T-cell (primary cell): ENCODE measurements at regions of chr12 and their contacts with region 1.

Region 1: GRCh38 chr12:9721394-9722092 is 11.4 kb downstream of the CLECL1 start:
- DNase-seq: no peak
- ATAC-seq: no peak
- H3K4me3 ChIP-seq: no peak overlapping the region
- H3K4me3 Mint-ChIP-seq: no peak overlapping the region
- H3K27ac ChIP-seq: no peak overlapping the region
- H3K27ac Mint-ChIP-seq: no peak overlapping the region
- H3K4me1 ChIP-seq: peaks cover 0 to 4% of the 10 kb centered on the region in 2 experiments
- H3K4me1 Mint-ChIP-seq: peaks cover 3 to 19% (median 15%) of the 10 kb centered on the region in 3 donors
- H3K27me3 ChIP-seq: no peaks in the 10 kb centered on the region
- H3K27me3 Mint-ChIP-seq: peaks cover 0 to 4% of the 10 kb centered on the region in 2 donors

Region 2: GRCh38 chr12:9634177-9634803 is 87.3 kb before region 1 on chr12:
- CTCF ChIA-PET with region 1: interaction called, 3 to 10 read pairs
- POLR2A ChIA-PET with region 1: no interaction called
- DNase-seq: peak; percentile 48 to 91 (median 74)
- ATAC-seq: peak; percentile 79 to 90 (median 82)
- H3K4me3 ChIP-seq: no peak overlapping the region
- H3K4me3 Mint-ChIP-seq: peak overlapping the region; percentile 17 to 54 (median 28)
- H3K27ac ChIP-seq: peak overlapping the region; percentile 48
- H3K27ac Mint-ChIP-seq: peak overlapping the region; percentile 74 to 95
- H3K4me1 ChIP-seq: peaks cover 24 to 25% of the 10 kb centered on the region in 2 experiments
- H3K4me1 Mint-ChIP-seq: peaks cover 76 to 91% (median 77%) of the 10 kb centered on the region in 3 donors
- H3K27me3 ChIP-seq: no peaks in the 10 kb centered on the region
- H3K27me3 Mint-ChIP-seq: no peaks in the 10 kb centered on the region

Region 3: GRCh38 chr12:9750276-9751203 is 29.0 kb after region 1 on chr12:
- CTCF ChIA-PET with region 1: no interaction called
- POLR2A ChIA-PET with region 1: no interaction called
- DNase-seq: peak in 23 of 35 experiments; percentile 15 to 85 (median 40)
- ATAC-seq: peak; percentile 46 to 75 (median 72)
- H3K4me3 ChIP-seq: peak overlapping the region in 1 of 2 donors; percentile 32
- H3K4me3 Mint-ChIP-seq: peak overlapping the region in 2 of 3 donors; percentile 28 to 39
- H3K27ac ChIP-seq: no peak overlapping the region
- H3K27ac Mint-ChIP-seq: peak overlapping the region in 1 of 2 donors; percentile 46
- H3K4me1 ChIP-seq: peaks cover 9 to 26% of the 10 kb centered on the region in 2 experiments
- H3K4me1 Mint-ChIP-seq: peaks cover 43 to 54% (median 46%) of the 10 kb centered on the region in 3 donors
- H3K27me3 ChIP-seq: no peaks in the 10 kb centered on the region
- H3K27me3 Mint-ChIP-seq: no peaks in the 10 kb centered on the region